GM12878 (cell line): ENCODE measurements at regions of chr6 and their contacts with region 1.

Region 1: DNA sequence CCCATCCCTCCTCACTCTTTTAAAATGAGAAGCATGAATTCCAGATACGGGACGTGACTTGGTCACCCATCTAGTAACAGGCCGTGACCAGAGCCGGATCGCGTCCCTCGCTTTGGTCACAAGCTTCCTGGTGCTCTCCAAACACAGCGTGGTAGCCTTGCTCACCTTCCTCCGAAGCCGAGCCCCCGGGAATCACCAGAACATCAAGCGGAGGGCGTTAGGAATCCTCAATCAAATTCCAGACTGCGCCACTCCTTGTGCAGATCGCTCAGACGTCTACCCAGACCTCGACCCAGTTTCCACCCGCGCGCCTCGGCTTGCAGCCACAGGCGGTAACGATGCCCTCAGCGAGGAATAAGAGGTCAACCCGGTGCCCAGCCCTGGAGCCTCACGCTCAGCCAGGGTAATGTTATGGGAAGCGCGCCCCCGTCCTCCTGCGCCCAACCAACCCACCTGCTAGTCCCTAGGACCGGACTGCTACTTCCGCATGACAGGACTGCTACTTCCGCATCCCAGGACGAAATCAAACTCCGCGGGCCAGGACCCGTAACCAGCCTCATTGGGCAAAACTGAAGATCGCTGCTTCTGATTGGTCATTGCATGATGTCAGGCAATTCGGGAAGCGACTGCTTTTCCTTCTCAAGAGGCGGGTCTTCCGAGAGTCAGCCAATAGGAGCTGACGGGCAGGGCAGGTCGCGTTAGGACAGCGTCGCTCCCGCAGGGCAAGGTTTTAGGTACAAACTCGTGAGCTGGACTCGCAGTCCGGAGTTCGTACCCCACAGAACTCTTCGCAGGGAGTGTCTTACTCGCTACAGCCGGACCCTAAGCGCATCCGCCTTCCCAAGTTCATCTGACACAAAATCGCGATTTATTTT is at the start of gene MTFR2:
- DNase-seq: peak; percentile 99
- ATAC-seq: peak; percentile 94
- H3K4me3 ChIP-seq: peak within 1 kb of the TSS; percentile 80
- H3K27ac ChIP-seq: peak within 1 kb of the TSS; percentile 75
- H3K4me1 ChIP-seq: no peaks in the 10 kb centered on the region
- H3K27me3 ChIP-seq: no peaks in the 10 kb centered on the region
- CTCF ChIP-seq: no peak
- EP300 ChIP-seq: peak in 1 of 2 experiments; percentile 27; a peak in 1 of 4 replicates
- POLR2A ChIP-seq: peak; percentile 90
- RAD21 ChIP-seq: no peak
- polyA plus RNA-seq, gene MTFR2: 24.6 to 26.9 TPM

Region 2: DNA sequence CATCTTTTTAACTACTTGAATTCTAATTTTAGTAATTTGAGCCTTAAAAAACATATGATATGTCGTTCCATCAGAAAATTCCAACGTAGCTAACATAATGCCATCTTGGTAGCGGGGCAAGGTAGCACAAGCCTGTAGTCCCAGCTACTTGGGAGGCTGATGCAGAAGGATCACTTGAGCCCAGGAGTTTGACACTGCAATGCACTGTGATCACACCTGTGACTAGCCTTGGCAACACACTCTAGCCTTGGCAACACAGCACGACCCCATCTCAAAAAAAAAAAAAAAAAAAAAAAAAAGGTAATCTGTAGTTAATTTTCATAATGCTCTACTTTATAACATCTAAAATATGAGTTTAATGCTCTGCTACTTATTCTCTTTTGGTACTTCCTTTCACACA is 32.9 kb after region 1 on chr6:
- CTCF ChIA-PET with region 1: interaction called, 14 read pairs
- POLR2A ChIA-PET with region 1: interaction called, 59 read pairs
- RAD21 ChIA-PET with region 1: interaction called, 6 read pairs
- SMC1A ChIA-PET with region 1: interaction called, 10 read pairs
- in situ Hi-C with region 1: no loop called
- intact Hi-C with region 1: loop called (anchors 2 kb)
- DNase-seq: no peak
- ATAC-seq: peak; percentile 41
- H3K4me3 ChIP-seq: peak overlapping the region; percentile 39; the same call in 1 of the 2 replicates
- H3K27ac ChIP-seq: no peak overlapping the region
- H3K4me1 ChIP-seq: peaks cover 5% of the 10 kb centered on the region; the same call in 1 of the 2 replicates
- H3K27me3 ChIP-seq: no peaks in the 10 kb centered on the region
- CTCF ChIP-seq: no peak
- EP300 ChIP-seq: no peak
- POLR2A ChIP-seq: no peak
- RAD21 ChIP-seq: no peak

Region 3: GRCh38 chr6:136289579-136290409 is 39.7 kb after region 1 on chr6 and contains the start of gene BCLAF1:
- CTCF ChIA-PET with region 1: interaction called, 4 read pairs
- POLR2A ChIA-PET with region 1: interaction called, 59 read pairs
- RAD21 ChIA-PET with region 1: interaction called, 6 read pairs
- SMC1A ChIA-PET with region 1: interaction called, 10 read pairs
- in situ Hi-C with region 1: no loop called
- intact Hi-C with region 1: loop called (anchors 2 kb)
- DNase-seq: peak; percentile 98
- ATAC-seq: peak; percentile 93
- H3K4me3 ChIP-seq: peak within 1 kb of the TSS; percentile 72
- H3K27ac ChIP-seq: peak within 1 kb of the TSS; percentile 100
- H3K4me1 ChIP-seq: peaks cover 10% of the 10 kb centered on the region; the same call in 1 of the 2 replicates
- H3K27me3 ChIP-seq: no peaks in the 10 kb centered on the region; a peak in 1 of 4 replicates
- CTCF ChIP-seq: no peak
- EP300 ChIP-seq: 0 out of 4 replicates have a peak, but pooled peaks of 1 of the 2 experiments have one; percentile 21
- POLR2A ChIP-seq: peak; percentile 97
- RAD21 ChIP-seq: no peak
- polyA plus RNA-seq, gene BCLAF1: 56.0 to 62.1 TPM